ENCODE measurements at regions of chr13 and their contacts with region 1.

Region 1: GRCh38 chr13:51632591-51633362 is 48.5 kb downstream of the WDFY2 start:
- DNase-seq: peak; percentile 21 to 88 (median 84)
- H3K4me3 ChIP-seq: peak overlapping the region in 44 of 59 donors; percentile 3 to 57 (median 30)
- H3K27ac ChIP-seq: peak overlapping the region; percentile 54 to 97 (median 90)
- H3K27me3 ChIP-seq: no peaks in the 10 kb centered on the region
- CTCF ChIP-seq: peak in 13 of 56 donors; percentile 11 to 44 (median 26)

Region 2: DNA sequence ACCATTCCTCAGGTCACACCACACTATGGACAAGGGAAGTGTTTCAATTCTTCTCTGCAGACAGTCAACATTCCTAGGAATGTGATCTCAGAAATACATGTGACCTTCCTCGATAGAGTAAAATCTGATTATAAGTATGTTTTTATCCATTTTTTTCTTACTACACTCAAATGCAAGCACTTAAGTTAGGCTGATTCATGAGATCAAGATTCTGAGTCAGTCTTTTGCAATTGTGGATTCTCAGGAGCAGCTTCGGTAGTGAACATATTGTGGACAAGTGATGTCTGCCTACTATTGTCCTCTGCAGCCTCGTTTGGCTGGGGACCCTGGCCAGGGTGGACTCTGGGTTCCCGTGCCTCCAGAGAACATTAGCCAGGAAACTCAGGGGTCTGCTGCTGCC is 290.1 kb before region 1 on chr13:
- intact Hi-C with region 1: no loop called
- DNase-seq: no peak
- H3K4me3 ChIP-seq: no peak overlapping the region
- H3K27ac ChIP-seq: no peak overlapping the region
- H3K27me3 ChIP-seq: no peaks in the 10 kb centered on the region
- CTCF ChIP-seq: no peak

Region 3: DNA sequence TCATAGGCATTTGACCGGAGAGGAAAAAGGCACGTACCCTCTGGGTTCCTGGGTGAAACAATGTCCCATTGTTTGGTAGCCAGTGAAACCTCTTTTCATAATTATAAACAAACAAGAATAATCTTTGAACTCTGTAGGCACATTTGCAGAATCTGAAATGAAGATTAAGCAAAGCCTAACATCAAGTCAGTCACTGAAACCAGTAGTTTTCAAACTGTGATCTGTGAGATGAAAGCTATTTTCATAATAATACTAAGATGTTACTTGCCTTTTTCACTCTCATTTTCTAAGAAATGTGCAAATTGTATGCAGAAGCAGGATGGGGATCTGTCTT is 56.9 kb after region 1 on chr13:
- intact Hi-C with region 1: loop called (anchors 5 kb)
- DNase-seq: peak in 1 of 10 donors; percentile 40
- H3K4me3 ChIP-seq: peak overlapping the region in 36 of 59 donors; percentile 1 to 50 (median 20)
- H3K27ac ChIP-seq: peak overlapping the region; percentile 30 to 96 (median 85)
- H3K27me3 ChIP-seq: no peaks in the 10 kb centered on the region
- CTCF ChIP-seq: peak in 1 of 56 donors; percentile 9